Activated CD4-positive, alpha-beta T cell treated with anti-CD3 and anti-CD28 coated beads, Interleukin-2, amount 10 ng/mL, durations not matched to agents 7 days and 5 days (primary cell): ENCODE measurements at regions of chr16 and their contacts with region 1.

Region 1: GRCh38 chr16:57422026-57422944 is 17.7 kb downstream of the CCL17 start:
- DNase-seq: no peak
- H3K4me3 Mint-ChIP-seq: no peak overlapping the region
- H3K27ac Mint-ChIP-seq: no peak overlapping the region
- H3K4me1 Mint-ChIP-seq: peaks cover 16% of the 10 kb centered on the region
- H3K27me3 Mint-ChIP-seq: no peaks in the 10 kb centered on the region

Region 2: DNA sequence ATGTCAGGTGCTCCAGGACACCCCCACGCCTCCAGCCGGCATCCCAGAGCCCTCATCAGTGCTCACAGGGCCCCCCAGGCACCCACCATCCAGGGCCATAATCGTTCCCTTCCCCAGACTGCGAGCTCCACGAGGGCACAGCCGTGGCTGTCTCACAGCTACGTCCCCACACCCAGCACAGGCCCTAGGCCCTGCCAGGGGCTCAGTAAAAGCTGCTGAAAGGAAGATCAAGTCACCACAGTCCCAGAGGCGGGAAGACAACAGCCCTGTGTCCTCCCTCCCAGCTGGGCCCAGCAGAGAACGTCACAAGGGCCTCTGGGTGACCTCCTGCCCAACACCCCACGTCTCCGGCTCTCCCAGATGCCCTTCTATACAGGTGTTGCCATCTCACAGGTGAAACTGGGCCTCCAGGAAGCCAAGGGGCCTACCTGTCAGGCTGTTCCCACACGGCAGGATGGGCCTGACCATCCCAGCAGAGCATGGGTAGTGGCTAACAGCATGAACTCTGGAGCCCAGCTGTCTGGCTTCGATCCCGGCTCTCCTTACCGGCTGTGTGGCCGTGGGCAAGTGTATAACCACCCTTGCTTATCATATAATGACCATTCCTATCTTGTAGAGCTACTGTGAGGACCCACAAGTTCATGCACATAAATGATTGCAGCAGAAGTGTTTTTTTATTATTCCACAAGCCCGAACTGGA is 159.3 kb before region 1 on chr16:
- CTCF ChIA-PET with region 1: no interaction called
- POLR2A ChIA-PET with region 1: interaction called, 11 read pairs
- DNase-seq: no peak
- H3K4me3 Mint-ChIP-seq: no peak overlapping the region
- H3K27ac Mint-ChIP-seq: peak overlapping the region; percentile 62
- H3K4me1 Mint-ChIP-seq: peaks cover 39% of the 10 kb centered on the region
- H3K27me3 Mint-ChIP-seq: no peaks in the 10 kb centered on the region

Region 3: GRCh38 chr16:57519796-57520360 is 97.6 kb after region 1 on chr16:
- CTCF ChIA-PET with region 1: interaction called, 25 read pairs
- POLR2A ChIA-PET with region 1: no interaction called
- DNase-seq: peak; percentile 84
- H3K4me3 Mint-ChIP-seq: no peak overlapping the region
- H3K27ac Mint-ChIP-seq: no peak overlapping the region
- H3K4me1 Mint-ChIP-seq: peaks cover 19% of the 10 kb centered on the region
- H3K27me3 Mint-ChIP-seq: no peaks in the 10 kb centered on the region